ENCODE measurements at regions of chr13 and their contacts with region 1.

Region 1: GRCh38 chr13:20495082-20496023 is 30.3 kb downstream of the CRYL1 start:
- DNase-seq: peak in 8 of 9 donors; percentile 41 to 75 (median 70)
- ATAC-seq: peak; percentile 95
- H3K4me3 ChIP-seq: no peak overlapping the region
- H3K4me3 Mint-ChIP-seq: no peak overlapping the region
- H3K27ac ChIP-seq: no peak overlapping the region
- H3K27ac Mint-ChIP-seq: peak overlapping the region in 5 of 9 donors; percentile 29 to 87 (median 52)
- H3K4me1 ChIP-seq: no peaks in the 10 kb centered on the region
- H3K4me1 Mint-ChIP-seq: peaks cover 5 to 17% (median 13%) of the 10 kb centered on the region in 7 donors
- H3K27me3 ChIP-seq: no peaks in the 10 kb centered on the region
- H3K27me3 Mint-ChIP-seq: no peaks in the 10 kb centered on the region

Region 2: GRCh38 chr13:20525690-20526544 is 30.6 kb after region 1 on chr13 and contains the start of gene CRYL1:
- CTCF ChIA-PET with region 1: no interaction called
- POLR2A ChIA-PET with region 1: no interaction called
- intact Hi-C with region 1: loop called in 1 of 2 experiments (anchors 1 kb)
- DNase-seq: peak; percentile 56 to 78 (median 68)
- ATAC-seq: peak; percentile 92
- H3K4me3 ChIP-seq: peak within 1 kb of the TSS; percentile 68
- H3K4me3 Mint-ChIP-seq: peak within 1 kb of the TSS; percentile 76 to 94 (median 87)
- H3K27ac ChIP-seq: peak within 1 kb of the TSS; percentile 65
- H3K27ac Mint-ChIP-seq: peak within 1 kb of the TSS; percentile 66 to 96 (median 88)
- H3K4me1 ChIP-seq: peaks cover 0 to 7% of the 10 kb centered on the region in 2 donors
- H3K4me1 Mint-ChIP-seq: peaks cover 11 to 40% (median 25%) of the 10 kb centered on the region in 7 donors
- H3K27me3 ChIP-seq: no peaks in the 10 kb centered on the region
- H3K27me3 Mint-ChIP-seq: peaks cover 0 to 9% (median 0%) of the 10 kb centered on the region in 5 donors
- total RNA-seq, gene CRYL1: 12.3 to 21.2 (median 16.3) TPM

Region 3: DNA sequence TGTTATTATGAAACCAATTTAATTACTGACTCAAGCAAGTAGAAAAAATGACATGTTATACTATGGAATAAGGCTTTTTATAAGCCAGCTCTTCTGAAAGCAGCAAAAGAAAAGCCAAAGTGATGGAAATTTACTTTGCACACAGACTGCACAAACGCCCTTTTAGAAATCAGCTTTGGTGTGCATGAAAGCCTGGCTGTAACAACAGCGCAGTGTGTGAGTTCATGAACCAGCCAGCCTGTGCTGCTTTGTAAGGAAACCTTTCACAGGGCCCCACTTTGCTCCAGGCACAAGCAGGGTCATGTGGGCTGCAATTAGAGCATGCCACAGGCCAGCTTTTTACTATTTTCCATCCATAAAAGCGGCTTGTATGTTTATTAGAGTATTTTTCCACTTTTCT is 58.0 kb after region 1 on chr13:
- CTCF ChIA-PET with region 1: no interaction called
- POLR2A ChIA-PET with region 1: no interaction called
- intact Hi-C with region 1: no loop called
- DNase-seq: no peak
- ATAC-seq: no peak
- H3K4me3 ChIP-seq: no peak overlapping the region
- H3K4me3 Mint-ChIP-seq: no peak overlapping the region
- H3K27ac ChIP-seq: no peak overlapping the region
- H3K27ac Mint-ChIP-seq: no peak overlapping the region
- H3K4me1 ChIP-seq: no peaks in the 10 kb centered on the region
- H3K4me1 Mint-ChIP-seq: no peaks in the 10 kb centered on the region
- H3K27me3 ChIP-seq: no peaks in the 10 kb centered on the region
- H3K27me3 Mint-ChIP-seq: no peaks in the 10 kb centered on the region

Region 4: GRCh38 chr13:20703780-20704445 is 208.6 kb after region 1 on chr13:
- CTCF ChIA-PET with region 1: interaction called, 3 read pairs
- POLR2A ChIA-PET with region 1: no interaction called
- intact Hi-C with region 1: loop called in 1 of 2 experiments (anchors 5 kb)
- DNase-seq: peak; percentile 70 to 84 (median 80)
- ATAC-seq: peak; percentile 93
- H3K4me3 ChIP-seq: no peak overlapping the region
- H3K4me3 Mint-ChIP-seq: peak overlapping the region in 4 of 10 donors; percentile 59 to 97 (median 72)
- H3K27ac ChIP-seq: no peak overlapping the region
- H3K27ac Mint-ChIP-seq: peak overlapping the region in 1 of 9 donors; percentile 56
- H3K4me1 ChIP-seq: peaks cover 3 to 8% of the 10 kb centered on the region in 2 donors
- H3K4me1 Mint-ChIP-seq: peaks cover 0 to 13% (median 8%) of the 10 kb centered on the region in 7 donors
- H3K27me3 ChIP-seq: peaks cover 0 to 5% of the 10 kb centered on the region in 2 donors
- H3K27me3 Mint-ChIP-seq: peaks cover 13 to 48% (median 17%) of the 10 kb centered on the region in 5 donors

Region 5: DNA sequence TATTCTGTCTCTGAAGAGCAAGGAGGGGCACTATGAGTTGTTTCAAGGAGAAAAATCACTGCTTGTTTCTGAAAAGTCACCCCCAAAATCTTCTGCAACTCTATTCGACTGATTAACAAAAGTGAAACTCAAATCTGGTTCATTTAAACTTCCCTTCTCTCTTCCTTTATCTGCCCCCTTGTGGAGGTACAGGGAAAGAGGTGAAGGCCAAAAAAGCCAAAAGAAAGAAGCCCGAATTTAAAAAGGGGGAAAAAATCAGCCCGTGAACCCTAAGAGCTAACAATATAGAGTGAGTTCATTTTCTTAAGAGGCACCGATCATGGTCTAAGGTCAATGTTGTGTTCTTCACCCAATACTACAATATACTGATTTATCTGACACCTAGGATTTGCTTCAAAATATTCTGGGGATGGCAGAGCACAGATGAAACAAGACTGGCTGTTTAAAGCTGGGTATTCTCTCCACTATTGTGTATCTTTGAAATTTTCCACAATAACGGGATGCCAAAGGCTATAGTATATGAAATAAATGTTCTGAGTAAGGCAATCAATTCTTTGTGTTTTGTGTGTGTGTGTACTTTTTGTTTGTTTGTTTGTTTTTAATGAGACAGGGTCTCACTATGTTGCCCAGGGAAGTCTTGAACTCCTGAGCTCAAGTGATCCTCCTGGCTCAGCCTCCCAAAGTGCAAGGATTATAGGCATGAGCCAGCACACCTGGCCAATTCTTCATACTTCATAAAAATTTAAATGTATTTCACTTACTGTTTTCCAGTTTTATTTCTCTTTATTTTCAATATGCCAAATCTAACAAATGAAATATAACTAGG is 333.4 kb after region 1 on chr13:
- CTCF ChIA-PET with region 1: interaction called, 65 read pairs
- POLR2A ChIA-PET with region 1: no interaction called
- intact Hi-C with region 1: loop called (anchors 1 kb)
- DNase-seq: peak in 7 of 9 donors; percentile 46 to 75 (median 67)
- ATAC-seq: peak; percentile 93
- H3K4me3 ChIP-seq: no peak overlapping the region
- H3K4me3 Mint-ChIP-seq: peak overlapping the region in 8 of 10 donors; percentile 51 to 81 (median 73)
- H3K27ac ChIP-seq: peak overlapping the region; percentile 14
- H3K27ac Mint-ChIP-seq: peak overlapping the region; percentile 35 to 87 (median 77)
- H3K4me1 ChIP-seq: no peaks in the 10 kb centered on the region
- H3K4me1 Mint-ChIP-seq: peaks cover 7 to 15% (median 10%) of the 10 kb centered on the region in 7 donors
- H3K27me3 ChIP-seq: no peaks in the 10 kb centered on the region
- H3K27me3 Mint-ChIP-seq: no peaks in the 10 kb centered on the region

Region 6: GRCh38 chr13:21476893-21477472 is 981.6 kb after region 1 on chr13:
- CTCF ChIA-PET with region 1: no interaction called
- POLR2A ChIA-PET with region 1: no interaction called
- intact Hi-C with region 1: loop called in 1 of 2 experiments (anchors 1 kb)
- DNase-seq: peak; percentile 59 to 82 (median 65)
- ATAC-seq: peak; percentile 94
- H3K4me3 ChIP-seq: peak overlapping the region; percentile 50
- H3K4me3 Mint-ChIP-seq: peak overlapping the region; percentile 74 to 87 (median 82)
- H3K27ac ChIP-seq: peak overlapping the region; percentile 24
- H3K27ac Mint-ChIP-seq: peak overlapping the region in 8 of 9 donors; percentile 22 to 86 (median 58)
- H3K4me1 ChIP-seq: no peaks in the 10 kb centered on the region
- H3K4me1 Mint-ChIP-seq: peaks cover 7 to 17% (median 11%) of the 10 kb centered on the region in 7 donors
- H3K27me3 ChIP-seq: no peaks in the 10 kb centered on the region
- H3K27me3 Mint-ChIP-seq: peaks cover 0 to 5% (median 0%) of the 10 kb centered on the region in 5 donors